ENCODE measurements at regions of chr18 and their contacts with region 1.

Region 1: GRCh38 chr18:69349912-69350597 is 50.6 kb upstream of the DOK6 start:
- DNase-seq: no peak
- H3K4me3 ChIP-seq: no peak overlapping the region
- H3K27ac ChIP-seq: no peak overlapping the region
- H3K4me1 ChIP-seq: no peaks in the 10 kb centered on the region
- H3K27me3 ChIP-seq: no peaks in the 10 kb centered on the region
- CTCF ChIP-seq: no peak
- EP300 ChIP-seq: no peak
- POLR2A ChIP-seq: no peak

Region 2: GRCh38 chr18:69365658-69366057 is 15.6 kb after region 1 on chr18:
- in situ Hi-C with region 1: no loop called
- intact Hi-C with region 1: no loop called
- DNase-seq: no peak
- H3K4me3 ChIP-seq: no peak overlapping the region
- H3K27ac ChIP-seq: no peak overlapping the region
- H3K4me1 ChIP-seq: no peaks in the 10 kb centered on the region
- H3K27me3 ChIP-seq: no peaks in the 10 kb centered on the region
- CTCF ChIP-seq: no peak
- EP300 ChIP-seq: no peak
- POLR2A ChIP-seq: no peak

Region 3: DNA sequence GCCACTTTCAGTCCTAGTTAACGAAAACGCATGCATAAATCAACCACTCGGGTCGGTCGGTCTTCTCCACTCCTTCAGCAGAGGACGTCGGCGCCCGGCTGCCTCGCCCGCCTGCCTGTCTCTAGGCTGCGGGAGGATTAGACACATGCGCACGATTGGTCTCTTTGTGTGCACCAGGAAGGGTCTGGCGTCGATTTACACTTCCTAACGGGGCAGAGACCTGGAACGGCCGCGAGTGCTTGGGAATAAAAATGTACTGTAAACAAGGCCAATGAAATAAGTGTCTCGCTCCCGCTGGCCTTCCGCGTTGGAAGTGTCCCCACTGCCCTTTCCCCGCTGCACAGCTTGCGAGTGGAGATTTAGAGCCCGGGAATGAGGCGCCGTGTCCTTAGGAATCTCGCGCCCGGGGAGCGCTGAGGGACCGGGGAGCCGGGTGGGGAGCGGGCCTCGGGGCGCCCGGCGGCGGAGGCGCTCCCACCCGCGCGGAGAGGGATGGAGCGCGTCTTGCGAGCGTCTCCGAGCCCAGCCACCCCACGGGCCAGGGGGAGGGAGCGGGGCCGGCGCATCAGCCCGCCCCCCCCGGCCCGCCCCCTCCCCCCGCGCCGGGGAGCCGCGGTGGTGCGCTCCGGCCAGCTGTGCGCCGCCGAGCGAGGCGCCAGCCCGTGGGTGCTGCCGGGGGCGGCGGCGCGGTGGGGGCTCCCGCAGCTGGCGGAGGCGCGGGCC is 50.4 kb after region 1 on chr18 and contains the start of gene DOK6:
- in situ Hi-C with region 1: no loop called
- intact Hi-C with region 1: loop called (anchors 5 kb)
- DNase-seq: no peak
- H3K4me3 ChIP-seq: peak within 1 kb of the TSS; percentile 16 to 53 (median 36)
- H3K27ac ChIP-seq: peak within 1 kb of the TSS; percentile 55 to 69 (median 58)
- H3K4me1 ChIP-seq: peaks cover 0 to 19% (median 3%) of the 10 kb centered on the region in 4 donors
- H3K27me3 ChIP-seq: peaks cover 54% of the 10 kb centered on the region
- CTCF ChIP-seq: no peak
- EP300 ChIP-seq: no peak
- POLR2A ChIP-seq: no peak
- total RNA-seq, gene DOK6: 0.20 to 0.37 (median 0.30) TPM

Region 4: DNA sequence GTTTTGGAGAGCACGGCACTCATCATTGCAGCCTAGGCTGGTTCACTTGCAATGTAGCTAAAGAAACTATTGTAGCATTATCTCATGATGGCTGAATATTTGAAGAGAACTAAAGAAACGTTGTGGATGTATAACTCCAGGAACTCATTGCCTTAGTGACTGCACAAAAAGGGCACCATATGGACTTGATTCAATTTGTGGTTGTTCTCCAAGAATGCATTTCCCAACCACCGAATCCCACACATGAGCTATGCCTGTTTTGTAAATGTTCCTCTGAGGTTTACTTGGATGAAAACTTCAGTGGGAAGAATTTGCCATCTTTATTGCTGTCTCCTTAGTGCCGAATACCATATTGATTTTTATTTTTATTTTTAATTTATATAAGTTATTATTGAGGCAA is 94.2 kb after region 1 on chr18:
- in situ Hi-C with region 1: no loop called
- intact Hi-C with region 1: no loop called
- DNase-seq: no peak
- H3K4me3 ChIP-seq: no peak overlapping the region
- H3K27ac ChIP-seq: no peak overlapping the region
- H3K4me1 ChIP-seq: no peaks in the 10 kb centered on the region
- H3K27me3 ChIP-seq: no peaks in the 10 kb centered on the region
- CTCF ChIP-seq: no peak
- EP300 ChIP-seq: no peak
- POLR2A ChIP-seq: no peak

Measured in transverse colon (tissue), 4 donors.